ENCODE measurements at regions of chr12 and their contacts with region 1.

Region 1: GRCh38 chr12:6254491-6255157 is 54.4 kb downstream of the CD9 start:
- DNase-seq: no peak
- H3K4me3 ChIP-seq: no peak overlapping the region
- CTCF ChIP-seq: no peak

Region 2: GRCh38 chr12:6154730-6155459 is 99.7 kb before region 1 on chr12:
- in situ Hi-C with region 1: no loop called
- DNase-seq: no peak
- H3K4me3 ChIP-seq: no peak overlapping the region
- CTCF ChIP-seq: no peak

Region 3: DNA sequence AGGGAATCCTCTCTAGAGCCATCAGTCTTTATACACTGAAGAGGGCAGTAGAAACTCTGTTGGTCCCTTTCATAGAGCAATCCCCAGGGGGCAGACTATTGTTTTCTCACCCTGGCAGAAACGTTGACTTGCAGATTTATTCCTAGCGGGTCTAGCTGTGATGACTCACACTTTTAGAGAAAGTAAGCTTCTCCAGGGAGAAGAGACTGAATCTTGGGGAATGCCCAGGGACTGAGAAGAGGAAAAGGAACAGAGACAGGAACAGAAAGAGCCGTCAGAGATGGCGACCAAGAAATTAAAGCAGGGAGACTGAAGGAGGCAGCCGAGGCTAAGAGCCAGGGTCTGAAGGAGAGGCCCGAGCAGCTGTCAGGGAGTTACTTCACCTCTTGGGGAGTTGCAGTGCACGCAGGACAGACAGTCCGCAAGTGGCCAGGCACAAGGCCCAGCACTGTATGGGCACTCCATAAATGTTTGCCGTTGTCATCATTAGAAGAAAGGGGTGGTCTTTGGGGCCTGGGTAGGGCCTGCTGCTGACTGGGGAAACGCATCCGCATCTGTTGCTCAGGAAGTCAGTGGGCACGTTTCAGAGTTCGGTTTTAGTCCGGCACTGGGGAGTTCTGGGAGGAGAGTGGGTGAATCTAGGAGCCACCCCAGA is 68.8 kb after region 1 on chr12:
- in situ Hi-C with region 1: loop called (anchors 5 kb)
- DNase-seq: peak; percentile 86
- H3K4me3 ChIP-seq: no peak overlapping the region
- CTCF ChIP-seq: peak; percentile 64

Measured in astrocyte of the cerebellum (primary cell).